Heart right ventricle (tissue), 16 donors: ENCODE measurements at regions of chr1 and their contacts with region 1.

Region 1: GRCh38 chr1:160951443-160952128 is 3.0 kb downstream of the ITLN2 start:
- DNase-seq: peak; percentile 21 to 49
- ATAC-seq: peak in 7 of 8 donors; percentile 64 to 84 (median 73)
- H3K4me3 ChIP-seq: no peak overlapping the region
- H3K27ac ChIP-seq: no peak overlapping the region
- H3K4me1 ChIP-seq: peaks cover 0 to 27% (median 2%) of the 10 kb centered on the region in 9 donors
- H3K27me3 ChIP-seq: peaks cover 0 to 23% (median 8%) of the 10 kb centered on the region in 7 donors
- CTCF ChIP-seq: peak; percentile 26 to 75 (median 61)

Region 2: DNA sequence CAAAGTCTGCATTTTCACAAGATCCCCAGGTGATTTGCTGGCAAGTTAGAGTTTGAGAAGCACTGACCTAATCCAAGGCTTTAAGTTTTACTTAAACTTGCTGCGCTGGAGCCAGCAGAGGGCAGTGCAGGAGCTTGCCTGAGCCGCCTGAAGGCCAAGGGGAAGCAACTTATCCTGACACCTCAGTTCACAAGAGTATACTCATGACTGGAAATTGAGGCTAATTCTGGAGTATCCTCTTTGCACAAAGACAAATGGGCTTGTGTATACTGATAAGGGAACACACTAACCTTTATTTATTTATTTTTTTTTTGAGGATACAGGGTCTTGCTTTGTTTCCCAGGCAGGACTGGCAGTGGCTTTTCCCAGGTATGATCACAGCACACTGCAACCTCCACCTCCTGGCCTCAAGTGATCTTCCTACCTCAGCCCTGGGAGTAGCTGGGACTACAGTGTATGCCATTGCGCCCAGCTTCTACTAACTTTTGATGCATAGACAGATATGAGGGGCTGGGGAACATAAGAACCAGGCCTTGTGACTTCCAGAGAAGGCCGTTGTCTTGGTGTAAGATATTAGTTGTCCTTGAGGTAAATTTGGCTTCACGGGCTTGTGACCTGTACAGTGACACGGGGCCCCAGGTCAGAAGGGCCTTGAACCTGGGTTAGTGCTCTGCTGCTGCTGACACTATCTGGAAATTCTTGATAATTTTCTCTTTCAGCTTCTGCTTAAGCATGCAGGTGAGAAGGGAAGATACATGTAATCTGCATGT is 275.8 kb before region 1 on chr1:
- intact Hi-C with region 1: loop called in 3 of 10 experiments (anchors 10 kb)
- DNase-seq: peak; percentile 64 to 65
- ATAC-seq: peak; percentile 47 to 84 (median 80)
- H3K4me3 ChIP-seq: no peak overlapping the region
- H3K27ac ChIP-seq: peak overlapping the region in 1 of 10 donors; percentile 49
- H3K4me1 ChIP-seq: peaks cover 0 to 36% (median 0%) of the 10 kb centered on the region in 9 donors
- H3K27me3 ChIP-seq: peaks cover 0 to 36% (median 7%) of the 10 kb centered on the region in 7 donors
- CTCF ChIP-seq: peak; percentile 38 to 86 (median 77)

Region 3: DNA sequence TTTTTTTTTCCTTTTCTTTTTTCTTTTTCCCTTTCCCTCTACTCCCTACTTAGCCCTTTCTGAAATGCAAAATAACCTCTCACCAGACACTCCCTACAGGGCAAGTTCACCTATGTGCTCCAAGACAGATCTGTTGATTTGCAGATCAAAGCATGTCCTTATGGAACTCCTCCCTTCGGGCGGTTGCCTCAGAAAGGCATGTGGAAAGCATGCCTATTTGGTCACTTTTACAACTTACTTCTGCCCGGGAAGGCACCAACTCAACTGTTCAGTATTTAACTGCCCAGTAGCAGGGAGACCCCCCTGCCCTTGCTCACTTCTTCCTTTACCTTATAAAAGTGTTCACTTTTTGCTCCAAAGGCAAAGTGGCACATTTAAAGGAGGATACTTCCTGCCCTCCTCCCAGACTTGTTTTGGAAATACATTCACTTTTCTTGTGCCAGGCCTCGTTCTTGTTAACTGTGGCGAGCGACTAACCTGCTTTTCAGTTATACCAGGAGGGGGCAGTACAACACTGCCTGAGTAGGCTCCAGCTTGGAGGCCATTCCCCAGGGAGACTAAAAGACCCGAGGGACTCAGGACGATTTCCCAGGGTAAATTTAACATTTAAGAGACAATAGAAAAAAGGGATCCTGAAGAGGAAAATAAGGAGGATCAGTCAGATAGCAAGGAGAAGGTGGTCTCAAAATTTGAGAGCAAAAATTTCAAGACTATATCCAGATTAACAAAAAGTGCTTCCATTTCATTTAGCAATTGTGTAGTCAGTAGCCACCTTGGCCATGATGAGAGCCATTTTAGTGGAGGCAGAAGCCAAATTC is 224.9 kb before region 1 on chr1:
- intact Hi-C with region 1: loop called in 4 of 10 experiments (anchors 5 to 10 kb)
- DNase-seq: peak in 1 of 2 donors; percentile 50
- ATAC-seq: peak in 7 of 8 donors; percentile 55 to 90 (median 72)
- H3K4me3 ChIP-seq: no peak overlapping the region
- H3K27ac ChIP-seq: peak overlapping the region in 1 of 10 donors; percentile 45
- H3K4me1 ChIP-seq: peaks cover 0 to 30% (median 0%) of the 10 kb centered on the region in 9 donors
- H3K27me3 ChIP-seq: peaks cover 0 to 14% (median 0%) of the 10 kb centered on the region in 7 donors
- CTCF ChIP-seq: peak; percentile 48 to 88 (median 73)

Region 4: DNA sequence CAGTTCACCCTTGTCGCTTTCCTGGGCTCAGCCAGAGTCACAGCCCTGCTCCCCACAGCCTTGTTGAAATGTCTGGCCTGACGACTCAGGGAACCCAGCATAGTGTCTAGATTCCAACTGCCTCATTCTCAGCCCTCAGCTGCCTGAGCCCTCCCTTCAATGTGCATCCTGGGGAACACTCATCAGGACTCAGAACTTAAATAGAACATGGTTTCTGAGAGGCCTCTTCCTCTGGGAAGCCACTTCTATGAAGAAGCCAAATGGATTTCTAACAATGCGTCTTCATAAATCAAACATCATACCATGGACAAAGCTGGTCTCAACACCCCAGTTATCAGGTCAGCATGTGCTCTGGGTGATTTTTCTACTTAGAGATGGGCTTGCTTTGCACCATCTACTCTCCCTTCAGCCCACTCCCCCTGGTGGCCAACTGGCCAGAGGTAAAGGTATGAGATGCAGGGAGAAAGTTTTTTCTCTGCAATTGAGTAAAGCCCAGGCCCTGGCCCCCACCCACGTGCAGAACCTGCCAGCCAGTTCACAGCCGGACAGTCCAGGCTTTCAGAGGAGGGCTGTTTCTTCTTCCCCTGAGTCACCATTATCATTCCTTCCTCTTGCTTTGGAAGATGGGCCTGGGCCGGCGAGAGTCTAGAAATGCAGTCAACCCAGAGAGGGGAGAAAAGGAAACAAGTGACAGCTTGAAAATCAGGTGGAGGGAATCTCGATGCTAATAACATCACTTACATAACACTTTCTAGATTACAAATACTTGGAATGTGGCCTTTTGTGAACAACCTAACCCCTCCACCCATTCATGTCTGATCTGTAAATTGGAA is 121.0 kb before region 1 on chr1:
- intact Hi-C with region 1: loop called in 7 of 10 experiments (anchors 1 to 10 kb)
- DNase-seq: peak; percentile 21 to 39
- ATAC-seq: peak in 2 of 8 donors; percentile 27 to 31
- H3K4me3 ChIP-seq: no peak overlapping the region
- H3K27ac ChIP-seq: no peak overlapping the region
- H3K4me1 ChIP-seq: no peaks in the 10 kb centered on the region
- H3K27me3 ChIP-seq: peaks cover 0 to 20% (median 0%) of the 10 kb centered on the region in 7 donors
- CTCF ChIP-seq: peak in 7 of 9 donors; percentile 33 to 62 (median 53)

Region 5: GRCh38 chr1:160837558-160838205 is 113.9 kb before region 1 on chr1:
- intact Hi-C with region 1: loop called (anchors 1 to 10 kb)
- DNase-seq: peak in 1 of 2 donors; percentile 40
- ATAC-seq: peak in 7 of 8 donors; percentile 58 to 70 (median 64)
- H3K4me3 ChIP-seq: no peak overlapping the region
- H3K27ac ChIP-seq: peak overlapping the region in 2 of 10 donors; percentile 37 to 73
- H3K4me1 ChIP-seq: peaks cover 0 to 44% (median 3%) of the 10 kb centered on the region in 9 donors
- H3K27me3 ChIP-seq: peaks cover 0 to 14% (median 0%) of the 10 kb centered on the region in 7 donors
- CTCF ChIP-seq: peak in 3 of 9 donors; percentile 11 to 33 (median 13)

Region 6: GRCh38 chr1:160844447-160845232 is 106.9 kb before region 1 on chr1:
- intact Hi-C with region 1: loop called in 7 of 10 experiments (anchors 5 to 10 kb)
- DNase-seq: no peak
- ATAC-seq: no peak
- H3K4me3 ChIP-seq: no peak overlapping the region
- H3K27ac ChIP-seq: no peak overlapping the region
- H3K4me1 ChIP-seq: peaks cover 0 to 9% (median 0%) of the 10 kb centered on the region in 9 donors
- H3K27me3 ChIP-seq: peaks cover 0 to 26% (median 8%) of the 10 kb centered on the region in 7 donors
- CTCF ChIP-seq: no peak

Region 7: GRCh38 chr1:161132410-161133219 is 181.0 kb after region 1 on chr1 and contains the start of gene DEDD:
- intact Hi-C with region 1: no loop called
- DNase-seq: peak; percentile 90 to 97
- ATAC-seq: peak; percentile 95 to 97 (median 96)
- H3K4me3 ChIP-seq: peak within 1 kb of the TSS; percentile 55 to 85 (median 74)
- H3K27ac ChIP-seq: peak within 1 kb of the TSS; percentile 89 to 99 (median 96)
- H3K4me1 ChIP-seq: peaks cover 4 to 63% (median 45%) of the 10 kb centered on the region in 9 donors
- H3K27me3 ChIP-seq: no peaks in the 10 kb centered on the region
- CTCF ChIP-seq: peak in 2 of 9 donors; percentile 18 to 39
- total RNA-seq, gene DEDD: 21.7 to 33.0 (median 26.3) TPM